ENCODE measurements at regions of chr9 and their contacts with region 1.

Region 1: DNA sequence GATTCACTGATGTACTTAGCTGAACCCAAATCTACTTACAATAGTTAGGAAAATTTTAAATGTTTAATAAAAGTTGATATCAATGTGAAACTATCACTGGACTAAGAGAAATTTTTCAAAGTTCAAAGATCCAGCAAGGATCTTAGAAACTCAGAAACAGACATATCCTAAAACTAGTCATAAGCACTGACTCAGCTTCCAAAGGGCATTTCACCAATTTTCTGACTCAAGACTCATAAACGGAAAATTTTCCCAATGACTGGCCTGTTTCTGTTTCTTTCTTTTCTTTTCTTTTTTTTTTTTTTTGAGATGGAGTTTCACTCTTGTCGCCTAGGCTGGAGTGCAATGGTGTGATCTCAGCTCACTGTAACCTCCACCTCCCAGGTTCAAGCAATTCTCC is 66.6 kb downstream of the CDC14B start:
- DNase-seq: no peak

Region 2: GRCh38 chr9:95595721-95596295 is 957.3 kb before region 1 on chr9:
- intact Hi-C with region 1: no loop called
- DNase-seq: no peak

Region 3: DNA sequence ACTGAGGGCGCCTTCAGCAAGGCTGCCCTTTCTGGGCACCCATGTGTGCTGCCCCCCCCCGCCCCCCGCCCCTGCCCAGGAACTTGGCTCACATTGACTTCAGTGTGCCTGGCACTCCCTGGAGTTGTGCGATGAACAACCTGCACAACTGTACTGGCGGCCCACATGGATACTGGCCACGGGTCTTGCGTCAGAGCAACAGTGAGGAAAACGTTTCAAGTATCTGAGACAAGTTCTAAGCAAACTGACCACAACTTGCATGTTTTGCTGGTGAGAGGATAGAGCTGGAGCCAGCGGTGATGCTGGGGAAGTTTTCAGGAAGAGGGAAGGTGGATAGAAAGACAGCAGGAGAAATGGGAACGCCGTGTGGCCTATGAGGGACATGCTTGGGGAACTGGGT is 57.7 kb before region 1 on chr9:
- intact Hi-C with region 1: loop called (anchors 5 kb)
- DNase-seq: no peak

Region 4: GRCh38 chr9:96888591-96888990 is 335.5 kb after region 1 on chr9:
- intact Hi-C with region 1: no loop called
- DNase-seq: no peak

Measured in posterior cingulate gyrus (tissue), 11 donors.